Activated CD4-positive, alpha-beta memory T cell treated with anti-CD3 and anti-CD28 coated beads, Interleukin-2, amount 10 ng/mL, durations not matched to agents 7 days and 5 days (primary cell): ENCODE measurements at regions of chr10 and their contacts with region 1.

Region 1: DNA sequence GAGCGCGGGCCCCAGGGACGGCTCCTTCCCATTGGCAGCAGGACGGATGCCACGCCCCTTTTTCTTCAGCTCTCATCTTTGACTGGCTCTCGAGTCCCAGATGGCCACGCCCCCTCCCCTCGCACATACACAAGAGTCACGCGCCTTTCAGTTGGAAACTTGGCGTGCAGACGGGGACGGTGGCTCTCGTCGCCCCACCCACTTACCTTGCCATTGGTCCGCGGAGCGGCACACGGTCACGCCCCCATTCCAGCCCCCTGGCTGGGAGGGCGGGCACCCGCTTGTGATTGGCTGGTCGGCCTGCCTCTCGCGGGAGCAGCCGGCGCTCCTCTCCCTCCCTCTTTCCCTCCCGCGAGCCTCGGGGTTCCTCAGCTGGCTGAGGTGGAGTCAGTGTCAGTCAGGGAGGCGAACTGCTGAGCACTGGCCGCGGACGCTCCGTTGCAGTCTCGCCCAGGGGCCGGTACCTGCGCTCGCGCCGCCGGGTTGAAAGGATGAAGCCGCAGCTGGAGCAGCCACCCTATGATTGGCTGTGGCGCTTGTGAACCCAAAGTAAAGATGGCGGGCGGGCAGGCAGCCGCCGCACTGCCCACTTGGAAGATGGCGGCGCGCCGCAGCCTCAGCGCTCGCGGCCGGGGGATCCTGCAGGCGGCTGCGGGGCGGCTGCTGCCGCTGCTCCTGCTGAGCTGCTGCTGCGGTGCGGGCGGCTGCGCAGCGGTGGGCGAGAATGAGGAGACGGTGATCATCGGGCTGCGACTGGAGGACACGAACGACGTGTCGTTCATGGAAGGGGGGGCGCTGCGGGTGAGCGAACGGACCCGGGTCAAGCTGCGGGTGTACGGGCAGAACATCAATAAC is at the start of gene CNNM2:
- DNase-seq: peak; percentile 100
- H3K4me3 Mint-ChIP-seq: peak within 1 kb of the TSS; percentile 90
- H3K27ac Mint-ChIP-seq: peak within 1 kb of the TSS; percentile 84
- H3K4me1 Mint-ChIP-seq: peaks cover 67% of the 10 kb centered on the region
- H3K27me3 Mint-ChIP-seq: peaks cover 3% of the 10 kb centered on the region
- total RNA-seq, gene CNNM2: 7.9 to 8.4 TPM

Region 2: DNA sequence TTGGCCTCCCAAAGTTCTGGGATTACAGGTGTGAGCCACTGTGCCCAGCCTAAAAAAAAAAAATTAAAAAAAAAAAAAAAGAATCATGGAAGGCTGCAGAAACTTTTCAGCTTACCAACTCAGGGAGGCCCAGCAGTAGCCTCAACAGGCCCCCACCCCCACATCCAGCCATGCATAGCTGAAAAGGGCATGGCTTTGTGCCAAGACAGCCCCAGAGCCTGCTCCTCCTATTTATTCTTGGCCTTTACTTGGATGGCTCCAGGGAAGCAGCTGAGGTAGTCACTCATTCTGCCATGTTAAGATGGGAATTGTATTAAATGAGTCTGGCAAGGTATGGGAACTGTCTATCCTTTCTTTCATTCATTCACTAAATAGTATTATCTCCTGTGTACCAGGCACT is 13.8 kb before region 1 on chr10:
- CTCF ChIA-PET with region 1: interaction called, 18 read pairs
- POLR2A ChIA-PET with region 1: interaction called, 3 read pairs
- DNase-seq: no peak
- H3K4me3 Mint-ChIP-seq: no peak overlapping the region
- H3K27ac Mint-ChIP-seq: no peak overlapping the region
- H3K4me1 Mint-ChIP-seq: no peaks in the 10 kb centered on the region
- H3K27me3 Mint-ChIP-seq: no peaks in the 10 kb centered on the region

Region 3: DNA sequence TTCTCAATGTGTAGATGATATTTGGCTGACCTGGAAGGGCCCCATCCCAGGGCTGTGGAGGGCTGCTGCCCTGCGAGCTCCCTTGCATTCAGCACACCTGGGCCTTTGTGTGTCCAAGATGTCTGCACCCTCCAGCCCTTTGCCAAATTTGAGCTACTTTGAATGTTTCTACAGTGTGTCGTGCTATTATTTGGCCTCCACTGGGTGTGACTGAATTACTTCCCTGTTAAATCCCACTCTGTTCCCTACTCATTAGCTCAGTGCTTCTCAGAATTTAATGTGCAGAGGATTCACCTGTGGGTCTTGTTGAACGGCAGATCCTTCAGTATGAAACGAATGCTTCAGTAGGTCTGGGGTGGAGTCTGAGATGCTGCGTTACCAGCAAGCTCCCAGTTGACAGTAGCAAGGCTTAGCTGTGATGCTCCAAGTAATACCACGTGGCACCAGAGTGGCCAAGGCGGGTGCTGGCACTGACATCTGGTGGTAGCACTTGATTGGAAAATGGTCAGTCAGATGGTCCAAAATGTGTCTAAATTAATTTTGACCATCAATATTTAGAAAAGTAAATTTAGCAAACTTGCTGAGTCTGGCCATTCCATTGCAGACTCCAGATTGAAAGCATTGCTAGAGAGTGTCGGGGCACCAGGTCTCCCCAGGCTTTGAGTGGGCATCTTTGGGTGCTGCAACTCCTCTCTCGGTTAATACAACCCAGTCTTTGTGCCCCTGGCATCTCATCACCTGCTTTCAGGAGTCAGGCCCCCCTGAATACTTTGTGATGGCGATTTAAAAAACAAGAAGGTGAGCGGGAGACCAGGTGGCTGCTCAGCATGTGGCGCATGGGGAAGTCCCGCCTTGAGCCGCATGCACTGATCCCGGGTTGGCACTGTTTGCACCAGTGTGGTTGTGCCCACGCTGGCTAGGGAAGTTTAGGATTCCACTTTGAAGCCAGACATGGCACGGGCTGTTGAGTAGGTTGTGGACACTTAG is 144.7 kb after region 1 on chr10:
- CTCF ChIA-PET with region 1: interaction called, 90 read pairs
- POLR2A ChIA-PET with region 1: interaction called, 26 read pairs
- DNase-seq: no peak
- H3K4me3 Mint-ChIP-seq: no peak overlapping the region
- H3K27ac Mint-ChIP-seq: no peak overlapping the region
- H3K4me1 Mint-ChIP-seq: peaks cover under 1% of the 10 kb centered on the region
- H3K27me3 Mint-ChIP-seq: no peaks in the 10 kb centered on the region

Region 4: DNA sequence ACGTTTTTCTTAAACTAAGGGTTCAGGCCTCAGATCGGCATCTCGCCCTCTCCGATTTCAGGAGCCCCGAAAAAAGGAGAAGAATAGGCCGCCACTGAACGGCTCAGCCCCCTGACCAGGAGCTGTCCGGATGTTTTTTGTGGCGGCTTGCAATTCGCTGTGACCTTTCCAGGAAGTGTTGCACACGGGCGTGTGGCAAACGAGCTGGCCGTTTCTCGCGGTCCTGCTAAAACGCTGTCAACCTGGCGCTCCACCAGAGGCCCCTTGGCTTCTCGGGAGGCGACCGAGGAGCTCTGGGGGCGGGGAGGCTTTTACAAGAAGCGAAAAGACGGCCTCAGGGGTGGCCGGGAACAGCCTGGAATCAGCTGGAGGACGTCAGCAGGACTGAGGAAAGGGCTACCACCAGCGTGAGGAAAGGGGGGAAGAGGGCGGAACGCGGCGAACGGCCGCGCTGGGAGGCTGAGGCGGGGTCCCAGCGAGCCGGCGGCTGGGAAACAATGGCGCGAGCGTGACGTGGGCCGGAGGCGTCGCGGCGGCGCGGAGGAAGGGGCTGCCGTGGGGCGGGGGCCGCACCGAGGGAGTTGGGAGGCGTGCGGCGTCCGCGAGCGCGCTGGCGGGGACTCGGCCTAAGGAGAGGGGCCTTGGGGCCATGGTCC is 274.4 kb after region 1 on chr10:
- CTCF ChIA-PET with region 1: interaction called, 10 read pairs
- POLR2A ChIA-PET with region 1: interaction called, 9 read pairs
- DNase-seq: peak; percentile 75
- H3K4me3 Mint-ChIP-seq: peak overlapping the region; percentile 99
- H3K27ac Mint-ChIP-seq: peak overlapping the region; percentile 97
- H3K4me1 Mint-ChIP-seq: peaks cover 46% of the 10 kb centered on the region
- H3K27me3 Mint-ChIP-seq: no peaks in the 10 kb centered on the region

Region 5: DNA sequence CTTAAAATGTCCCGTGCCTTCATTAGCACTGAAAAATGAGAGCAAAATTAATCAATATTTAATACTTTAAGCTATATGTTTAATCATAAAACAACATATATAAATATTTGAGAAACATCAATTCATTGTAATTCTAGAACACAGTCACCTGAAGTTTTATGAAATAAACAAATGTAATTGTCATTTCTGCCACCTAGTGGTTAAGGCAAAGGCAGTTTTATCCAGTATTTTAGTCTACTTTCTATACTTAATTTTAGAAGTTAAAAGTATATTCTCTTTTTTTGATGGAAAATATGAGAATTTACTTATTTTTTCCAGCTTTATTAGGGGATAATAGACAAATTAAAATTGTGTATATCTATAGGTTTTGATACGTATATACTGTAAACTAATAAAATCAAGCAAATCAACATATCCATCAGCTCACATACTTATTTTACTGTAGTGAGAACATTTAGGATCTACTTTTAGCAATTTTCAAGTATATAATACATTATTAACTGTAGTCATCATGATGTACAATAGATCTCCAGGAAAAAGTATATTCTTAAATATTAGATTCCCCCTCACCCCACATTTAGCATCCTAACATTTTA is 415.8 kb after region 1 on chr10:
- CTCF ChIA-PET with region 1: interaction called, 12 read pairs
- POLR2A ChIA-PET with region 1: no interaction called
- DNase-seq: no peak
- H3K4me3 Mint-ChIP-seq: no peak overlapping the region
- H3K27ac Mint-ChIP-seq: no peak overlapping the region
- H3K4me1 Mint-ChIP-seq: no peaks in the 10 kb centered on the region
- H3K27me3 Mint-ChIP-seq: no peaks in the 10 kb centered on the region